ENCODE measurements at regions of chr2 and their contacts with region 1.

Region 1: DNA sequence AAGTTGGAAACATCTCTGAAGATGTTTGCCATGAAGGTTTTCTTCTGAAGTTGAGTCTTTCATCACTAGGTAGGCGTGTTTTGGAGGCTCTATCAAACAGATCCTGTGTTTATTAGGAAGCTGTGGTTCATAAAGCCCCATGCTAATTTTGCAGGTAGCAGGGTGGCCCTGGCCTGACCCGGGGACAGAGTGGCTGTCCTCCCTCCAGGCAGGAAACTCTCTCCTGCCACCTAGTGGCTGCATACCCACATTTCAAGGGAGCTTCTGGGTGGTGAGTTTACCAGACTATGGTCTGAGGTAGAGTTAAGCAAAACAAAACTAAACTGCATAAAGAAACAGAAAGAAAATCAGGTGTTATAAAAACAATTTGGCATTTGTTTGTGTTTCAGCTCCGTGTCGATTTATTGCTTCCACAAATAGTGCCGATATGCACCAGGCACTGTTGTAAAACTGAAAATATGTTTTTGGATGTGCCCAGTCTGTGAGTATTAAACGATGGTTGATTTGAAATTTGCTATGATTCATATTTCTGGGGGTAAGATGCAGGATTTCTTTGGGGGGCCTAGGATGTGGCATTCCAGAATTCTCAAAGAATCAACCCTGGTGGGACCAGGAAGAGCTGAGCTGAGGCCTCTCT is 26.0 kb upstream of the IL37 start:
- DNase-seq: peak; percentile 61
- H3K4me3 Mint-ChIP-seq: no peak overlapping the region
- H3K27ac Mint-ChIP-seq: peak overlapping the region; percentile 30
- H3K4me1 Mint-ChIP-seq: peaks cover 34% of the 10 kb centered on the region
- H3K27me3 Mint-ChIP-seq: no peaks in the 10 kb centered on the region

Region 2: DNA sequence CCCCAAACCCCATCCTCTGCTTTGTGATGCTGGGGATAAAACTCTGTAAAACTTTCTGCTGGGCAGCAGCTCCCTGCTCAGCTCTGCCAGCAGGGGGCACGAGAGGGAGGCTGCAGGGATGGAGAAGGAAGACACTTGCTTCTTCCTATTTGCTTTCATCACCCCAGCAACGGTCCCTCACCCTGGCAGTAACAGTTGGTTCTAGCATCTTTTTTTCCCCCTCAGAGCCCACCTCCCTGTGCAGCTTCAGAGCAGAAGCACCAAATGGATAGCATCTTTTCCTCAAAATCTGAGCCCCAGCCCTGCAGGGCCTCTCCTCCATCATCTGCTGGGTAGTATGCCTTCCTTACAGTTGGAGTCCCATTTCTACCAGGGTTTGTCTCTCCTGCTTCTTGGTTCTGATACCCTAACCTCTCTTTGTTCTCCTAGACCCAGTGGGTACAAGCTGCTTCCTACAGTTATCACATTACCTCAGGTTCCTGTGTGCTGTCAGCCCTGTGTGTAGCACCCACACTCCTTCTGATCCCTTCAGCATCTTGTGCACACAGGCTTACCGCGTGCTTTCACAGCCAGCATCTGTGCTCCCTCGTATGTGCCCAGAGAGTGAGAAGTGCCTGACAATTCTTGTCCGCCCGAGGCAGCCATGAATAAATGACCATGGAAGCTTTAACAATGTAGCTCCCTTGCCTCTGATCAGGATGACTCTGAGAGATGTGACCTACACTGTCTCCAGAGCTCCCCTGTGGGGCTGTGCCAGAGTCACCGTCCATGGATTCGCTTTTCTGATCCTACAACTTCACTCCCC is 135.0 kb before region 1 on chr2:
- intact Hi-C with region 1: loop called (anchors 1 kb)
- DNase-seq: peak; percentile 74
- H3K4me3 Mint-ChIP-seq: peak overlapping the region; percentile 13
- H3K27ac Mint-ChIP-seq: peak overlapping the region; percentile 75
- H3K4me1 Mint-ChIP-seq: peaks cover 35% of the 10 kb centered on the region
- H3K27me3 Mint-ChIP-seq: no peaks in the 10 kb centered on the region

Region 3: DNA sequence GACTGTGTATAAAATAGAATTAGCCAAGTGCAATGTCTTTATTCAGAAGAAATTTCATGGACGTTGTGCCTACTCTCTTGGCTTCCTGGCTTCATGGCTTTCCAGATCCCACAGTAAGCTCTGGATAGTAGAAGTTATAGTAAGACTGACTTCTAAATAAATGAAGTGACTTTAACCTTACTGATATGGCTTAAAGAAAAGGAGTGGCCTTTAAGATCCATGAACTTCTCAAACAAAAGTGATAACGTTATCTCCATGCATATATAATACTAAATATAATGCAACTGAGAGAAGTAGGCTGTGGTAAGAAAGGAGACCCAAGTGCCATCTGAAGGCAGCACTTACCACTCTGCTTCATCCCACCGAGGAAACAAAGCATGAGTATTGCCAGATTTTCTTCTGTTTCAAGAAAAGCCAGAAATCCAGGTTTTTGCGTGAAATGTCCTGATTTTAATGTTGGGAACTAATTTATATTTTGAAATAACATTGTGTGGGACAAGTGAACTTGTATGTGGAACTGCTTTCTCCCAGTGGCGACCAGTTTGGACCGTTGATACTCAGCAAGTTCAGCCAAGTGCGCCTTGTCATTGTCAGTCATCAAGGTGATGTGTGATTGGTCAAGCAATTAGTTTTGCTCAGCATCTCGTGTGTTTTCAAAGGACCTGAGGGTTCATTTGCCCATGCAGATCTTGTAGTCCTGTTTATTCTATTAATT is 12.1 kb after region 1 on chr2:
- intact Hi-C with region 1: no loop called
- DNase-seq: no peak
- H3K4me3 Mint-ChIP-seq: no peak overlapping the region
- H3K27ac Mint-ChIP-seq: no peak overlapping the region
- H3K4me1 Mint-ChIP-seq: no peaks in the 10 kb centered on the region
- H3K27me3 Mint-ChIP-seq: peaks cover 15% of the 10 kb centered on the region

Region 4: GRCh38 chr2:112916145-112916571 is 31.2 kb after region 1 on chr2:
- intact Hi-C with region 1: loop called (anchors 2 kb)
- DNase-seq: no peak
- H3K4me3 Mint-ChIP-seq: no peak overlapping the region
- H3K27ac Mint-ChIP-seq: peak overlapping the region; percentile 63
- H3K4me1 Mint-ChIP-seq: peaks cover 26% of the 10 kb centered on the region
- H3K27me3 Mint-ChIP-seq: peaks cover 4% of the 10 kb centered on the region

Region 5: GRCh38 chr2:112941753-112942658 is 57.0 kb after region 1 on chr2:
- intact Hi-C with region 1: loop called (anchors 5 kb)
- DNase-seq: peak; percentile 62
- H3K4me3 Mint-ChIP-seq: no peak overlapping the region
- H3K27ac Mint-ChIP-seq: no peak overlapping the region
- H3K4me1 Mint-ChIP-seq: peaks cover 3% of the 10 kb centered on the region
- H3K27me3 Mint-ChIP-seq: peaks cover 33% of the 10 kb centered on the region

Measured in activated T-helper 2 cell treated with anti-CD3 and anti-CD28 coated beads, Interferon-gamma antibody, Interleukin-2, Interleukin-4, amounts not matched to agents 10 μg/mL and 5 μg/mL and 100 μg/mL, durations not matched to agents 14 hours and 24 hours and 36 hours (primary cell).